Head of caudate nucleus (tissue), 42 donors: ENCODE measurements at regions of chr21 and their contacts with region 1.

Region 1: DNA sequence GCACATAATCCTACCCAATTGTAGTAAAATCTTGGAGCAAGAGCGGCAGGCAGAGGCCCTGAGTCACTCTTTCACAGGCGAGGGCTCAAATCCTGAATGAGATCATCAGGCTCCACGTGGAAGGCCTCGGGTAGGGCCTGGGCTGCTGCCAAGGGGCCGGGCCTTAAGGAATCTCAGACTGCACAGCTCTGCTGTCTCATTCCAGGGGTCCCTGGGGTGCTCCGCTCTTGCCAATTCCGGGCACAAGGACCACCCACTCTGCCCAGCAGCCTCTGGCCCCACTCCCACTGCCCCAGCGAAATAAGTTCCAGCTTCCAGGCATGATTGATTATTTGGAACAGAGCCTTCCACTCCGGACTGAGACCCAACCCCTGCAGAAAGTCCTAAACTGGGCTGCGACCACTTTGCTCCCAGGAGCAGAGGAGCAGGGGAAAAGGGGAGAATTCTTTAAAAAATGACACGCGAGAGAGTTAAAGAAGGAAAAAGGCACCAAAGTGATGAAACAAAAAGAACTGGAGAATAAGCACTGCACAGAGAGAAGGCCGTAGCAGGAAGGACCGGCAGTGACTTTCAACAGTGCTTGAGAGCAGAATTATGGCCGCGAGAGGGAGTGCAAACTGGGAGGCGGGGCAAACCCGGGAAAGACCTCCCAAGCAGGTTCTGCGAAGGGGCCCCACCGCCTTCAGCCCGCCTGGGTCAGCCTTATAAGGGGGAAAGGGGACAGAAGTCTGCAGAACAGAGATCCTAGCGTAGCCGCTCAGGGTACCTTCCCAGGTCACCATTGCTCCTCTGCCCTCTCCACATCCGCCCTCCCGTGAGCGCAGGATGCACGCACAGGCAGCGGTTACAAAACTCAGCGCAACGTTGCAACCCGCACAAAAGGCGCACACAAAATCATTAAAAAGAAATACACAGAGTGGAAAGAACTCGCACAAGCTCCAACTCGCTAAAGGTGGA is 2.0 kb downstream of the ADAMTS1 start:
- DNase-seq: peak; percentile 54 to 95 (median 84)

Region 2: GRCh38 chr21:26769613-26770188 is 73.6 kb before region 1 on chr21:
- intact Hi-C with region 1: loop called (anchors 5 kb)
- DNase-seq: peak in 14 of 42 donors; percentile 7 to 62 (median 24)

Region 3: GRCh38 chr21:26887251-26887650 is 44.0 kb after region 1 on chr21:
- intact Hi-C with region 1: no loop called
- DNase-seq: no peak

Region 4: GRCh38 chr21:28336314-28336713 is 1493.1 kb after region 1 on chr21:
- intact Hi-C with region 1: loop called (anchors 5 kb)
- DNase-seq: peak in 22 of 42 donors; percentile 6 to 73 (median 31)

Region 5: GRCh38 chr21:28745131-28746016 is 1902.1 kb after region 1 on chr21:
- intact Hi-C with region 1: loop called (anchors 10 kb)
- DNase-seq: peak; percentile 41 to 92 (median 82)